Sciatic nerve (tissue), 2 donors: ENCODE measurements at regions of chr5 and their contacts with region 1.

Region 1: DNA sequence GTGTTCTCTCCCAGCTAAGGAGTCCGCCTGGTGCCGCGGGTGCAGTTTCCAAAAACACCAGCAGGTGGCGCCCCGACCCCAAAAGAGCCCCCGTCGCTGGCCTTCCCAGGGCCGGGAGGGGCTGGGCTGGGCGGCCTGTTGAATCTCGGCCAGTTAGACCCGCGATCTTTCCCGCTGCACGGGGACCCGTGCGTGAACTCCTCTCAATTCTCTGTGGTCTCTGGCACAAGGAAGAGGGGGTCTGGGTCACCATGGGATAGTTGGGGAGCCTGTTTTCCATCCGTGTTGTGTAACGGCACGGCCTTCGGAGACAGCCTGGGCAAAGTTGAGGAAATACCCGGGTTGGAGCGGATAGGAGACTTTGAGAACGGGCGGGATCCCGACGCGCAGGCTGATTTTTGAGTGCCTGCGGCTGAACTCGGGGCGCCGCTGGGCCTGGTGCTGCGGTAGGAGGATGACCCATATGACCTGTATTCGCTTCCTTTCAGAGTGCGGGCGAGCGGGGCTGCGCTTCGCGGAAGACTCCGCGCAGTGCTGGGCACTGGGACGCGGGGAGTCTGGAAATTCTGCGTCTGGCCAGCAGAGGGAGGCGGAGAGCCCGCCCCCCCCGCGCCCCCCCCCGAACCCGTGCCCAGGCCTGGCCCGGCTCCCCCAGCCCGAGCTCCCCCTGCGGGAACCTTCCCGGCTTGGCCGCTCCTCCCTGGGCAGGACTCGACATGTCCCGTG is 7.9 kb upstream of the PSD2 start:
- DNase-seq: peak; percentile 95
- ATAC-seq: peak; percentile 93

Region 2: GRCh38 chr5:139725073-139725830 is 62.5 kb before region 1 on chr5:
- intact Hi-C with region 1: no loop called
- DNase-seq: no peak
- ATAC-seq: peak; percentile 89

Region 3: DNA sequence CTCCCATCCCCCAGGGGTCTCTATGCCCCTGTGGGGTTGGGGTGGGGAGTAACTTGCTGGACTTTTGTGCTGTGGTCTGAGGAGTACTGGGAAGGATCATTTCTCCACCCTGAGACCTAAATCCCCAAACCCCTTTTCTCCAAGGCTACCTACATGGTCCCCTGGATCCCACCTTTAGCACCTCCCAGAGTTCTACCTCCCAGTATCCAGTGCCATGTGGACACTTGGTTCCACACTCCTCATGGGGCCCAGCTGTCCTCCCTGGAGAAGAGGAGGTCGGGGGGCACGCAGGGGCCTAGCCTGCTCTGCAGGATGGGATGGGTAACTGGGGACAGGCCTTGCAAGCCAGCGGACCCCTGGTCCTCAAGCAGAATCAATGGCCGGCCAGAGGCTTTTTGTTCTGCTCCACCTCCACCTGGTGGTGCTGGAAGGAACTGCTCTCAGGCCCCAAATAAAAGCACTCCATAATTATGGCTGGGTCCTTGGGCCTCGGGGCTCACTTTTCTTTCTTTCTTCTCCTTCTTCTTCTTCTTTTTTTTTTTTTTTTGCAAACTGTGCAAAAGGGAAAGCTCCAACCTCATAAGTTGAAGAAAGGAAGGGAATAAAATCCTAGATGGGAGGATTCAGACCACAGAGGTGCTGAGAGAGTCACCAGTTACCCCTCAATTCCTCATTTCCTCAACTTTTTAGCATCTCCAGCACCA is 76.3 kb after region 1 on chr5:
- intact Hi-C with region 1: loop called (anchors 5 kb)
- DNase-seq: peak; percentile 82
- ATAC-seq: peak; percentile 82

Region 4: DNA sequence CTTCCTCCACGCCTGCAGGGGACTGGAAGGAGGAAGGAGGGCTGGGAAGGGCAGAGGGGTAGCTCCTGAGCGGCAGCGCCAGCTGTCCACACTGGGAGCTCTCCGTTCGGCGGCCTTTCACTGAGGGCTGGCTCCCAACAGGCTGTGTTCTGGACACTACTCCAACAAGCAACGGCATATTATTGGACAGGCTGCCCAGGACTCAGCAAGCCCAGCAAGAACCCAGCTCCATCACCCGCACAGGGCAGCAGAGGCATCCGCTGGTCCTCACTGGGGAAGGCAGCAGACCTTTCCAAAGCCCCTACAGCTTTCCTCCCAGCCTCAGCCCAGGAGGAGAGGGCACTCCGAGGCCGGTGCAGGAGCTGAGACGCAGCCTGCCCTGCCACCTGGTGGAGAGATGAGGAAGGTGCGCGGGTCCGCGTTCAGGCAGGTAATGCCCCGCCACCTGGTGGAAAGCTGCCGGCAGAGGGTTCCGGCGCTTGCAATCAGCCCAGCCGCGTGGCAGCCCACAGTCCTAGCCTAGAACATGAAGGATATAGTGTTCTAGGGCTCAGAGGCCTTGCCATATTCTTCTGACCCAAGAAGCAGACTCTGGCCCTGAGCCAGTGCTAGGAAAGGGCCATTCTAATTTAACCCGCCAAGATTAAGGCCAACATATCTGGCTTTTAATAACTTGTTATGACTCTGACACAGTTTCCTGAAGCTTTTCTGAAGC is 181.0 kb after region 1 on chr5:
- intact Hi-C with region 1: loop called (anchors 5 kb)
- DNase-seq: peak; percentile 89
- ATAC-seq: peak; percentile 95